ENCODE measurements at regions of chr7 and their contacts with region 1.

Region 1: DNA sequence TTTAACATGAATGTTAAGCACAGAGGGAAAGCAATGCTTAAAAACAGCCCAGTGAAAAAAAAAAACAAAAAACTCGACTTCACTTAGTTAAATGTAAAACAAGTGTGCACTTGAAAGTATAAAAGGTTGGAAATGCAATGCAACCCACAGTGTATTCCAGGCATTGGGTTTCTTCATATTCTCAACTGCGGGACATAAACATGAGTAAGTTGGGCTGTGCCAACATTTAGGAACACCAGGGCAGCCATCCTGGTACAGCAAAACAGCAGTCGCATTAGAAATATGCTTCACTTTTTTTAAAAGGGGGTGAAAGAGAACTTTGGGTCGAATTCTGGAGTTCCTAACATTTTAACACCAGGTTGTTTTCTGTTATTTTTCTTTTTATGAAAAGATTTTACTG is 937 bp downstream of the STEAP1 start:
- DNase-seq: no peak
- ATAC-seq: no peak
- H3K4me3 ChIP-seq: peak overlapping the region in 1 of 10 donors; percentile 57
- H3K27ac ChIP-seq: no peak overlapping the region
- H3K4me1 ChIP-seq: peaks cover 0 to 13% (median 0%) of the 10 kb centered on the region in 9 donors
- H3K27me3 ChIP-seq: peaks cover 0 to 4% (median 0%) of the 10 kb centered on the region in 7 donors
- CTCF ChIP-seq: no peak

Region 2: DNA sequence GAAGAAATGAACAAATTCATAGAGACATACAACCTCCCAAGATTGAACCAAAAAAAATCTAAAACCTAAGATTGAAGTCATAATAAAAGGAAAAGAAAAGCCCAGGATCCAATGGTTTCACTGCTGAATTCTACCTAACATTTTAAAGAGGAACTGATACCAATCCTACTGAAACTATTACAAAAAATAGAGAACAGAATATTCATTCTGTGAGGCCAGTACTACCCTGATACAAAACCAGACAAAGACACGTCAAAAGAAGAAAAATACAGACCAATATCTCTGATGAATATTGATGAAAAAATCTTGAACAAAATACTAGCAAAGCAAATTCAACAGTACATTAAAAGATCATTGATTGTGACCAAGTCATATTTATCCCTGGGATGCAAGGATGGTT is 129.4 kb before region 1 on chr7:
- intact Hi-C with region 1: no loop called
- DNase-seq: no peak
- ATAC-seq: no peak
- H3K4me3 ChIP-seq: no peak overlapping the region
- H3K27ac ChIP-seq: no peak overlapping the region
- H3K4me1 ChIP-seq: no peaks in the 10 kb centered on the region
- H3K27me3 ChIP-seq: no peaks in the 10 kb centered on the region
- CTCF ChIP-seq: no peak

Region 3: GRCh38 chr7:90211391-90212148 is 56.4 kb after region 1 on chr7 and contains the start of gene STEAP2:
- intact Hi-C with region 1: loop called in 1 of 10 experiments (anchors 5 kb)
- DNase-seq: peak; percentile 84 to 89
- ATAC-seq: peak; percentile 98 to 100 (median 98)
- H3K4me3 ChIP-seq: peak within 1 kb of the TSS; percentile 46 to 73 (median 65)
- H3K27ac ChIP-seq: peak within 1 kb of the TSS; percentile 41 to 82 (median 72)
- H3K4me1 ChIP-seq: peaks cover 0 to 20% (median 0%) of the 10 kb centered on the region in 9 donors
- H3K27me3 ChIP-seq: peaks cover 0 to 46% (median 9%) of the 10 kb centered on the region in 7 donors
- CTCF ChIP-seq: peak in 8 of 9 donors; percentile 22 to 68 (median 54)
- total RNA-seq, gene STEAP2: 2.7 to 12.8 (median 7.9) TPM

Region 4: GRCh38 chr7:90250601-90251303 is 95.5 kb after region 1 on chr7:
- intact Hi-C with region 1: loop called in 2 of 10 experiments (anchors 10 kb)
- DNase-seq: no peak
- ATAC-seq: peak in 1 of 8 donors; percentile 39
- H3K4me3 ChIP-seq: no peak overlapping the region
- H3K27ac ChIP-seq: peak overlapping the region in 1 of 10 donors; percentile 73
- H3K4me1 ChIP-seq: peaks cover 0 to 18% (median 7%) of the 10 kb centered on the region in 9 donors
- H3K27me3 ChIP-seq: peaks cover 0 to 9% (median 0%) of the 10 kb centered on the region in 7 donors
- CTCF ChIP-seq: no peak

Region 5: GRCh38 chr7:90262438-90262837 is 107.2 kb after region 1 on chr7:
- intact Hi-C with region 1: loop called in 7 of 10 experiments (anchors 2 to 10 kb)
- DNase-seq: no peak
- ATAC-seq: peak in 1 of 8 donors; percentile 52
- H3K4me3 ChIP-seq: no peak overlapping the region
- H3K27ac ChIP-seq: no peak overlapping the region
- H3K4me1 ChIP-seq: peaks cover 0 to 20% (median 0%) of the 10 kb centered on the region in 9 donors
- H3K27me3 ChIP-seq: no peaks in the 10 kb centered on the region
- CTCF ChIP-seq: peak in 8 of 9 donors; percentile 6 to 62 (median 50)

Region 6: GRCh38 chr7:90298145-90299038 is 143.2 kb after region 1 on chr7:
- intact Hi-C with region 1: loop called in 1 of 10 experiments (anchors 5 kb)
- DNase-seq: no peak
- ATAC-seq: peak in 3 of 8 donors; percentile 61 to 81 (median 62)
- H3K4me3 ChIP-seq: no peak overlapping the region
- H3K27ac ChIP-seq: no peak overlapping the region
- H3K4me1 ChIP-seq: no peaks in the 10 kb centered on the region
- H3K27me3 ChIP-seq: no peaks in the 10 kb centered on the region
- CTCF ChIP-seq: peak in 7 of 9 donors; percentile 33 to 64 (median 54)

Region 7: GRCh38 chr7:90346336-90347125 is 191.3 kb after region 1 on chr7 and contains the start of gene GTPBP10:
- intact Hi-C with region 1: loop called in 1 of 10 experiments (anchors 5 kb)
- DNase-seq: peak; percentile 94
- ATAC-seq: peak; percentile 100
- H3K4me3 ChIP-seq: peak within 1 kb of the TSS; percentile 65 to 89 (median 74)
- H3K27ac ChIP-seq: peak within 1 kb of the TSS; percentile 45 to 96 (median 82)
- H3K4me1 ChIP-seq: peaks cover 0 to 23% (median 13%) of the 10 kb centered on the region in 9 donors
- H3K27me3 ChIP-seq: no peaks in the 10 kb centered on the region
- CTCF ChIP-seq: peak; percentile 50 to 80 (median 64)
- total RNA-seq, gene GTPBP10: 20.2 to 27.6 (median 23.7) TPM

Region 8: GRCh38 chr7:90424720-90425119 is 269.5 kb after region 1 on chr7:
- intact Hi-C with region 1: loop called in 9 of 10 experiments (anchors 1 to 10 kb)
- DNase-seq: no peak
- ATAC-seq: no peak
- H3K4me3 ChIP-seq: no peak overlapping the region
- H3K27ac ChIP-seq: no peak overlapping the region
- H3K4me1 ChIP-seq: peaks cover 0 to 14% (median 0%) of the 10 kb centered on the region in 9 donors
- H3K27me3 ChIP-seq: no peaks in the 10 kb centered on the region
- CTCF ChIP-seq: no peak